ENCODE measurements at regions of chr14 and their contacts with region 1.

Region 1: GRCh38 chr14:74945823-74946682 is 9.3 kb downstream of the PGF start:
- H3K4me3 ChIP-seq: no peak overlapping the region
- H3K27ac ChIP-seq: no peak overlapping the region
- H3K4me1 ChIP-seq: peaks cover 6% of the 10 kb centered on the region
- CTCF ChIP-seq: peak; percentile 72

Region 2: GRCh38 chr14:75002392-75003249 is 56.6 kb after region 1 on chr14 and contains the start of gene EIF2B2:
- CTCF ChIA-PET with region 1: interaction called, 10 read pairs
- POLR2A ChIA-PET with region 1: no interaction called
- H3K4me3 ChIP-seq: peak within 1 kb of the TSS; percentile 83
- H3K27ac ChIP-seq: peak within 1 kb of the TSS; percentile 55
- H3K4me1 ChIP-seq: no peaks in the 10 kb centered on the region
- CTCF ChIP-seq: peak; percentile 36; the same call in 1 of the 2 replicates